ENCODE measurements at regions of chr4 and their contacts with region 1.

Region 1: GRCh38 chr4:183074296-183074990 is 24.6 kb upstream of the WWC2 start:
- DNase-seq: no peak
- ATAC-seq: no peak
- H3K4me3 ChIP-seq: no peak overlapping the region
- H3K4me3 Mint-ChIP-seq: no peak overlapping the region
- H3K27ac ChIP-seq: no peak overlapping the region
- H3K27ac Mint-ChIP-seq: no peak overlapping the region
- H3K4me1 ChIP-seq: no peaks in the 10 kb centered on the region
- H3K4me1 Mint-ChIP-seq: no peaks in the 10 kb centered on the region
- H3K27me3 ChIP-seq: peaks cover 0 to 3% of the 10 kb centered on the region in 2 experiments
- H3K27me3 Mint-ChIP-seq: peaks cover 3 to 7% of the 10 kb centered on the region in 2 donors

Region 2: DNA sequence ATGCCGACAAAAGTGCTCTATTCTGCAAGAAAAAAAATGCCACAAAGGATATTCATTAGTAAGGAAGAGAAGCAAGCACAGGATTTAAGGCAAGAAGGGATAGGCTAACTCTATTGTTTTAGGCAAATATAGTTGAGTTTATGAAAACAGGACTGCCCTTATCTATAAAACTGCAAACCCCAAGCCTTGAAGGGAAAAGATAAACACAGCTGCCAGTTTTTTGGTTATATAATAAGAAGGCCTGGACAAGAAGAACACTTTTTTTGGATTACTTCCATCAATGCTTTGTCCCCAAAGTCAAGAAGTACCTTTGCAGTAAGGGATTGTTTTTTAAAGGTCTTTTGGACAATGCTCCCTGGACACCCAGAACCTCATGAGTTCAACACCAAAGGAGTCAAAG is 20.8 kb before region 1 on chr4:
- CTCF ChIA-PET with region 1: no interaction called
- POLR2A ChIA-PET with region 1: no interaction called
- DNase-seq: no peak
- ATAC-seq: no peak
- H3K4me3 ChIP-seq: no peak overlapping the region
- H3K4me3 Mint-ChIP-seq: no peak overlapping the region
- H3K27ac ChIP-seq: no peak overlapping the region
- H3K27ac Mint-ChIP-seq: no peak overlapping the region
- H3K4me1 ChIP-seq: no peaks in the 10 kb centered on the region
- H3K4me1 Mint-ChIP-seq: no peaks in the 10 kb centered on the region
- H3K27me3 ChIP-seq: peaks cover 0 to 3% of the 10 kb centered on the region in 2 experiments
- H3K27me3 Mint-ChIP-seq: peaks cover 10 to 27% of the 10 kb centered on the region in 2 donors

Region 3: GRCh38 chr4:183249857-183250256 is 175.4 kb after region 1 on chr4:
- CTCF ChIA-PET with region 1: interaction called, 22 to 40 read pairs
- POLR2A ChIA-PET with region 1: no interaction called
- DNase-seq: peak in 2 of 35 experiments; percentile 1 to 33
- ATAC-seq: no peak
- H3K4me3 ChIP-seq: no peak overlapping the region
- H3K4me3 Mint-ChIP-seq: no peak overlapping the region
- H3K27ac ChIP-seq: no peak overlapping the region
- H3K27ac Mint-ChIP-seq: no peak overlapping the region
- H3K4me1 ChIP-seq: no peaks in the 10 kb centered on the region
- H3K4me1 Mint-ChIP-seq: no peaks in the 10 kb centered on the region
- H3K27me3 ChIP-seq: no peaks in the 10 kb centered on the region
- H3K27me3 Mint-ChIP-seq: no peaks in the 10 kb centered on the region

Region 4: DNA sequence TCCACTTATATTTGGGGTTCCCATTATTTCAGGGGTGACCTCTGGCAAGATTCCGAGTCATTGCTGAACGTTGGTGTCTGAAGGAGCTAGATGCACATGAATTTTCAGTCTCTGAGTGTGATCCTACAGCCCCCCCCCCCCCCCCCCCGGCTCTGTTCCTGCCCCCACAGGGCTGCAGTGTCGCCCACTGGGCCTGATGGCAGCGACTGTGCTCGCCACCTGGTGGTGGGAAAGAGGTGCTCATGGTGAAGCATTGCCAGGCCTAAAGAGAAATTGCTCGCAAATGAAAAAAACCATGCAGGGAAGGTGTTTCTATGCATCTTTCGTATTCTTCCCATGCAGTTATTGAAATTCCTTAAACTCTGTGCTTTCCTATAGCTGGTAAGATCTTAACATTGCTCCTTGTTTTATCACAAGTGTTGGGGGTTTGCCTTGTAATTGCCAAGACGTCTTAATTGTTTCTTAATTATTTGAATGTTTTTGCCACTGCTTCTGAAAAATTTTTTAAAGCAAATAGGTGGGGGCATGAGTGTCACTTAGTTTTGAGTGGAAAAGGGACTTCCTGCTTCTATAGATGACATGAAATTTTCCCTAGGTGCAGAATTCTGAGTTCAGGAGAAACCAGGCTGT is 182.4 kb after region 1 on chr4:
- CTCF ChIA-PET with region 1: interaction called, 40 to 46 read pairs
- POLR2A ChIA-PET with region 1: no interaction called
- DNase-seq: peak in 28 of 35 experiments; percentile 11 to 60 (median 26)
- ATAC-seq: peak in 2 of 4 experiments; percentile 44 to 59
- H3K4me3 ChIP-seq: no peak overlapping the region
- H3K4me3 Mint-ChIP-seq: no peak overlapping the region
- H3K27ac ChIP-seq: no peak overlapping the region
- H3K27ac Mint-ChIP-seq: no peak overlapping the region
- H3K4me1 ChIP-seq: no peaks in the 10 kb centered on the region
- H3K4me1 Mint-ChIP-seq: peaks cover 0 to 1% (median under 1%) of the 10 kb centered on the region in 3 donors
- H3K27me3 ChIP-seq: peaks cover 0 to 3% of the 10 kb centered on the region in 2 experiments
- H3K27me3 Mint-ChIP-seq: no peaks in the 10 kb centered on the region

Region 5: GRCh38 chr4:183261953-183262775 is 187.7 kb after region 1 on chr4:
- CTCF ChIA-PET with region 1: interaction called, 29 to 46 read pairs
- POLR2A ChIA-PET with region 1: no interaction called
- DNase-seq: peak; percentile 30 to 79 (median 63)
- ATAC-seq: peak; percentile 87 to 93 (median 90)
- H3K4me3 ChIP-seq: no peak overlapping the region
- H3K4me3 Mint-ChIP-seq: no peak overlapping the region
- H3K27ac ChIP-seq: peak overlapping the region; percentile 34
- H3K27ac Mint-ChIP-seq: peak overlapping the region; percentile 81 to 87
- H3K4me1 ChIP-seq: peaks cover 3 to 5% of the 10 kb centered on the region in 2 experiments
- H3K4me1 Mint-ChIP-seq: peaks cover 6 to 10% (median 7%) of the 10 kb centered on the region in 3 donors
- H3K27me3 ChIP-seq: peaks cover 0 to 3% of the 10 kb centered on the region in 2 experiments
- H3K27me3 Mint-ChIP-seq: no peaks in the 10 kb centered on the region

Measured in T-cell (primary cell).